ENCODE measurements at regions of chr10 and their contacts with region 1.

Region 1: GRCh38 chr10:58513188-58514110 is 777 bp downstream of the BICC1 start:
- DNase-seq: peak; percentile 94
- H3K4me3 ChIP-seq: peak overlapping the region; percentile 79 to 92 (median 81)
- H3K27ac ChIP-seq: peak overlapping the region; percentile 87 to 91 (median 90)
- H3K4me1 ChIP-seq: peaks cover 0 to 59% (median 47%) of the 10 kb centered on the region in 4 donors
- H3K27me3 ChIP-seq: no peaks in the 10 kb centered on the region
- CTCF ChIP-seq: peak in 1 of 3 experiments; percentile 6
- EP300 ChIP-seq: no peak
- POLR2A ChIP-seq: no peak

Region 2: GRCh38 chr10:58225654-58226053 is 287.8 kb before region 1 on chr10:
- intact Hi-C with region 1: no loop called
- DNase-seq: no peak
- H3K4me3 ChIP-seq: no peak overlapping the region
- H3K27ac ChIP-seq: no peak overlapping the region
- H3K4me1 ChIP-seq: no peaks in the 10 kb centered on the region
- H3K27me3 ChIP-seq: no peaks in the 10 kb centered on the region
- CTCF ChIP-seq: no peak
- EP300 ChIP-seq: no peak
- POLR2A ChIP-seq: no peak

Region 3: DNA sequence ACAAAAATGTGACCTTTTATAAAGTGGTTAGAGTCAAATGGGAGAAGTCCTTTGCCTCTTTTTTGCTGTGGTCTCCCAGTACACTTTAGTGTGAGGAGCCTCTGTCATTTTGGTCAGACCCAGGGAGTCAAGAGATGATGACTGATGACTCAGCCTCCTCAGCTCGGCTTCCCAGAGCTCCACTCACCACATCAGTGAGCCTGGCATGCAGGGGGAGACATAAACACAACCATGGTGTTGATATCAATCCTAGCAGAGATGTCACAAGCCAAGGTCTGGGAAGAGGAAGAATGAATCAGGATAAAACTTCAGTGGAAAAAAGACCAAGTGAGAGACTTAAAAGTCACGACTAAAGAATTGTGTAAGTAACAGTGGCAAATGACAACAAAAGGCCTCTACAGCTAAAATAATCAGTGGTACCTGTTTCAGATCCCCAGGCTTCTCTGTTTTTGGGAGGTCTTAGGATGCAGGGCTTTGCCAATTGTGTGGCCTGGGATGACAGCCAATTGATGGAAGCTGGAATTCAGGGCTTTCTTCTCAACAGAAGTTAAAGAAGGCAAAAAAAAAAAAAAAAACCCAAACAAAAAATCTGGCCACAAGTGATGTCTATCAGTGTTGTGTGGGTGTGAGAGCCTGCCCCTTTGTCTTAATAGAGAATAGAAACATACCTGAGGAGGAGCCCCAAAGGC is 78.0 kb before region 1 on chr10:
- intact Hi-C with region 1: loop called (anchors 10 kb)
- DNase-seq: no peak
- H3K4me3 ChIP-seq: no peak overlapping the region
- H3K27ac ChIP-seq: peak overlapping the region in 1 of 4 donors; percentile 10
- H3K4me1 ChIP-seq: peaks cover 0 to 54% (median 45%) of the 10 kb centered on the region in 4 donors
- H3K27me3 ChIP-seq: no peaks in the 10 kb centered on the region
- CTCF ChIP-seq: no peak
- EP300 ChIP-seq: no peak
- POLR2A ChIP-seq: no peak

Region 4: GRCh38 chr10:58775960-58776567 is 262.6 kb after region 1 on chr10:
- intact Hi-C with region 1: loop called (anchors 10 kb)
- DNase-seq: no peak
- H3K4me3 ChIP-seq: no peak overlapping the region
- H3K27ac ChIP-seq: peak overlapping the region in 1 of 4 donors; percentile 21
- H3K4me1 ChIP-seq: peaks cover 3 to 39% (median 21%) of the 10 kb centered on the region in 4 donors
- H3K27me3 ChIP-seq: no peaks in the 10 kb centered on the region
- CTCF ChIP-seq: no peak
- EP300 ChIP-seq: no peak
- POLR2A ChIP-seq: no peak

Measured in esophagus muscularis mucosa (tissue), 4 donors.